Caco-2 (cell line): ENCODE measurements at regions of chr15 and their contacts with region 1.

Region 1: GRCh38 chr15:49046220-49047102 is at the start of gene SECISBP2L:
- DNase-seq: peak; percentile 96
- H3K4me3 ChIP-seq: peak within 1 kb of the TSS; percentile 98
- H3K4me3 Mint-ChIP-seq: peak within 1 kb of the TSS; percentile 97
- H3K27ac Mint-ChIP-seq: peak within 1 kb of the TSS; percentile 91
- H3K4me1 ChIP-seq: no peaks in the 10 kb centered on the region
- H3K4me1 Mint-ChIP-seq: peaks cover 7% of the 10 kb centered on the region
- H3K27me3 ChIP-seq: no peaks in the 10 kb centered on the region
- H3K27me3 Mint-ChIP-seq: no peaks in the 10 kb centered on the region
- CTCF ChIP-seq: peak in 1 of 2 experiments; percentile 70
- total RNA-seq, gene SECISBP2L: 27.9 and 29.7 TPM in 2 replicates

Region 2: GRCh38 chr15:48330855-48331795 is 715.3 kb before region 1 on chr15 and contains the start of gene DUT:
- CTCF ChIA-PET with region 1: no interaction called
- POLR2A ChIA-PET with region 1: no interaction called
- intact Hi-C with region 1: loop called (anchors 10 kb)
- DNase-seq: peak; percentile 72 to 80
- H3K4me3 ChIP-seq: peak within 1 kb of the TSS; percentile 92
- H3K4me3 Mint-ChIP-seq: peak within 1 kb of the TSS; percentile 99
- H3K27ac Mint-ChIP-seq: peak within 1 kb of the TSS; percentile 98
- H3K4me1 ChIP-seq: 0 out of 2 replicates have a peak, but pooled peaks cover 3% of the 10 kb centered on the region
- H3K4me1 Mint-ChIP-seq: peaks cover 16% of the 10 kb centered on the region
- H3K27me3 ChIP-seq: no peaks in the 10 kb centered on the region
- H3K27me3 Mint-ChIP-seq: no peaks in the 10 kb centered on the region
- CTCF ChIP-seq: no peak
- total RNA-seq, gene DUT: 82.4 and 84.1 TPM in 2 replicates

Region 3: DNA sequence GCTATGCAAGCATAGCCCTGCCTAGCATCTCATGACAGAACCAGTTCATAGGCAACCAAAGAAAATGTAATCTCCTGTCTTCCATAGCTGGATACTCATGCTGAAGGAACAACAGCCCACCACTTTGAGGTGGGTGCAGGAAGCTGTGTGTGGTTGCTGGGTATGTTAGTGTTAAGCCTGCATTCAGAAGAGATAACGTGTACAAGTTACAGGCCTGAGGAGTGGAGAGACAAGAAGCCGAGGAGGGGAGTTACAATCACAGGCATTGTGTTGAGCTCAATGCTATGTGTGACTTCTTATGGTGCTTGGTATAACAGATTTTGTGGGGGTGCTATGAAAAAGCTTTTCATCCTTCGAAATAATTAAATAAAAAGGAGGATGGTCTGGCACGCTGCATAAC is 42.5 kb after region 1 on chr15:
- CTCF ChIA-PET with region 1: no interaction called
- POLR2A ChIA-PET with region 1: no interaction called
- intact Hi-C with region 1: loop called (anchors 5 kb)
- DNase-seq: no peak
- H3K4me3 ChIP-seq: no peak overlapping the region
- H3K4me3 Mint-ChIP-seq: no peak overlapping the region
- H3K27ac Mint-ChIP-seq: no peak overlapping the region
- H3K4me1 ChIP-seq: peaks cover 11% of the 10 kb centered on the region
- H3K4me1 Mint-ChIP-seq: peaks cover 11% of the 10 kb centered on the region
- H3K27me3 ChIP-seq: no peaks in the 10 kb centered on the region
- H3K27me3 Mint-ChIP-seq: no peaks in the 10 kb centered on the region
- CTCF ChIP-seq: no peak

Region 4: DNA sequence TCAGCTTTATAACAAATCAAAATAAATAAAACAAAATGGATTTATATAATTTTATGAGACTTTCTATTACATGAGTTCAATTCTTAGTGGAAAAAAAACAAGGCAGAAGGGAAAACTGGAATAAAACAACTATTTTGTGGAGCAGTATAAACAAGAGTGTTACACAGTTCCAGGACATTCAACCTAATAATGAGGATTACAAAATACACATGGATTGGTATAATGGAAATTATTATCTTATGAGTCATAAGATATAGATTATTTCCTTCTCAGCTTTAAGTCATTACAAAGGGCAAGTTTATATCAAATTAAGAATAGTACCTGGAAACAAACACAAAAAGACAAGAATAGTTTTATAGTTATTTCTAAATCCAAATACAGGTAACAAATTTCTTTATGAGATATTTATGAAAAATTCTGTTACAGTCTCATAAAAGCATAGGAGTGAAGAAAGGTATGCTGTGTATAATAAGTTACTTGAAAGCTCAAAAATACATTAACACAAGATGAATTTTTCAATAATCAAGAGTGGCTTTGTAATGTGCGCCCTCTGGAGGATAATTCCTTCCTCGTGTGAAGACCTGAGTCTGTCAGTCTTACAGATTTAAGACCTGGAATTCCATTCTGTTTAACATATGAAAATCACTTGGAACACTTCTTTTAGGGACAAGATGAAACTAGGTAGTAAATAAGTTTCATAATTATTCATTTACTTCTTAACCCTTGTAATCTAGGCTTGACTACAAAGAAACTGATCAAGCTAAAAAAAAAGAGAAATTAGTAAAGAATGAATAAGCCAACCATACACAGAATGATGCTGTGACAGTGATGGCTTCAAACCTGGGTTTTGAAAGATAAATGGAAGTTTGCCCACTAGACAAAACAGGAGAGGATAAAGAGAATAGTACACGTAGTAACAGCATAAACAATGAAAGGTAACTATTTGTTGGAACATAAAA is 99.5 kb after region 1 on chr15:
- CTCF ChIA-PET with region 1: interaction called, 7 read pairs
- POLR2A ChIA-PET with region 1: no interaction called
- intact Hi-C with region 1: loop called (anchors 1 kb)
- DNase-seq: peak; percentile 37 to 54
- H3K4me3 ChIP-seq: no peak overlapping the region
- H3K4me3 Mint-ChIP-seq: no peak overlapping the region
- H3K27ac Mint-ChIP-seq: no peak overlapping the region
- H3K4me1 ChIP-seq: no peaks in the 10 kb centered on the region
- H3K4me1 Mint-ChIP-seq: peaks cover 8% of the 10 kb centered on the region
- H3K27me3 ChIP-seq: no peaks in the 10 kb centered on the region
- H3K27me3 Mint-ChIP-seq: no peaks in the 10 kb centered on the region
- CTCF ChIP-seq: peak; percentile 68 to 71

Region 5: GRCh38 chr15:49155110-49155833 is 108.8 kb after region 1 on chr15 and contains the start of gene COPS2:
- CTCF ChIA-PET with region 1: interaction called, 5 read pairs
- POLR2A ChIA-PET with region 1: no interaction called
- intact Hi-C with region 1: loop called (anchors 1 kb)
- DNase-seq: peak; percentile 94 to 95
- H3K4me3 ChIP-seq: peak within 1 kb of the TSS; percentile 98
- H3K4me3 Mint-ChIP-seq: peak within 1 kb of the TSS; percentile 99
- H3K27ac Mint-ChIP-seq: peak within 1 kb of the TSS; percentile 97
- H3K4me1 ChIP-seq: no peaks in the 10 kb centered on the region
- H3K4me1 Mint-ChIP-seq: peaks cover 7% of the 10 kb centered on the region
- H3K27me3 ChIP-seq: no peaks in the 10 kb centered on the region
- H3K27me3 Mint-ChIP-seq: no peaks in the 10 kb centered on the region
- CTCF ChIP-seq: no peak
- total RNA-seq, gene COPS2: 83.8 and 85.4 TPM in 2 replicates

Region 6: DNA sequence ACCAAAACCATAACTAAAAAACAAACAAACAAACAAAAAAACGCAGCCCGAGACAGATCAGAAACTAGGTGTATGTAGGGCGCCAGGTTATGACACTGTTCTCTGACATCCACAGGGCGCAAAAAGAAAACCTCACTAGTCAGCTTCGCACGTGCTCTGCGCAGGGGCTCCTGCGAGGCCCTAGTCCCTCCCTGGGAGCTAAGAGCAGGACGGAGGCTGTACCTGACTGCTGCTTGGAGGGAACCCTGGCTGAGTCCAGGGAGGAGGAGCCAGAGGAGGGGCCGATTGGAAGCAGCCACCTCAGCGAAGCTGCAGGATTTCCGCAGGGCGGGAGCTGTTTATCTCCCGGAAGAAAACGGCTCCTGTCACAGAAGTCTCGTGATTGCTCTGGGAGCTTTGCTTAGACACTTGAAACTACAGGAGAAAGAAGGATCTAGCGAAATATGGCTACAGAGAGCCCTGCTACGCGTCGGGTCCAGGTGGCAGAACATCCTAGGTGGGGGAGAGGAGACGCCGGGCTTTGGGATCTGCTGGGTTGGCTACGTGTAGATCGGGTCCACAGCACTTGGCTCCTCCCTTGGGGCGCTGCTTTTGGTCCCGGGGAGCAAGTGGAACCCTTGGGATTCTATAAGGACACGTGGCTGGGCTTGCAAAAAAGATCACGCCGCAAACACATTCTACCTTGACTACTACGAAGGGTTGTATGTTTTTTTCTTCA is 123.6 kb after region 1 on chr15 and contains the start of gene GALK2:
- CTCF ChIA-PET with region 1: no interaction called
- POLR2A ChIA-PET with region 1: no interaction called
- intact Hi-C with region 1: no loop called
- DNase-seq: peak; percentile 95 to 97
- H3K4me3 ChIP-seq: peak within 1 kb of the TSS; percentile 61
- H3K4me3 Mint-ChIP-seq: peak within 1 kb of the TSS; percentile 90
- H3K27ac Mint-ChIP-seq: peak within 1 kb of the TSS; percentile 97
- H3K4me1 ChIP-seq: peaks cover 6% of the 10 kb centered on the region
- H3K4me1 Mint-ChIP-seq: peaks cover 12% of the 10 kb centered on the region
- H3K27me3 ChIP-seq: no peaks in the 10 kb centered on the region
- H3K27me3 Mint-ChIP-seq: no peaks in the 10 kb centered on the region
- CTCF ChIP-seq: no peak
- total RNA-seq, gene GALK2: 25.5 and 29.8 TPM in 2 replicates

Region 7: DNA sequence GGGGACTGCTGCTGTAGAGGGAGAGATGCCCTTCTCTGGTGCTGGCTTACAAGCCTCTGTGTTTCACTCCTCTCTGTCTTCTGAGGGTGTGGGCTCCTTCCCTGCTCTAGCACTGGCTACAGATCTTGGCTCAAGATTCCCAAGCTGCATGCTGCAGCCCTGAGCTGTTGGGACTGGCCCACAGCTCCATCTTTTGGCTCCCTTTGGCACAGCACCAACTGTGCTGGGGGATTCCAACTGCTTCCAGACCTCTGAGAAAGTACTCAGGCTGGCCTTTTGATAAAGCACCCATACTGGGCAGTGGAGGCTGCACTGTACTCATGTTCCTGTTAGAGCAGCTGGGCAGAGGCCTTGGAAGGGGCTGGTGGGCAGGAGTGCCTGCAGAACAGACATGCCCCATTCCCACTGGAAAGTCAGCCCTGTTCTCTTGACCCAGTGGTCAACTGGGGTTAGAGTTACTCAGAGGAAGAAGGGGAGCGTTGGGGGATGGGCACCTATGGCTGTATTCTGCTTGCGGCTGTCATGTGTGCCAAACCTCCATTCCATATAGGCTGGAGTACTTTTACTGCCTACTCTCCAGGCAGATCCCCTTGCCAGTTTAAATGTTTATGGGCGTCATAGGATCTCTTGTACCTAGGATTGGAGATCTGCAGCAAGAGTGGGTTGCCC is 179.3 kb after region 1 on chr15:
- CTCF ChIA-PET with region 1: no interaction called
- POLR2A ChIA-PET with region 1: no interaction called
- intact Hi-C with region 1: loop called (anchors 10 kb)
- DNase-seq: peak; percentile 48 to 58
- H3K4me3 ChIP-seq: no peak overlapping the region
- H3K4me3 Mint-ChIP-seq: no peak overlapping the region
- H3K27ac Mint-ChIP-seq: no peak overlapping the region
- H3K4me1 ChIP-seq: no peaks in the 10 kb centered on the region
- H3K4me1 Mint-ChIP-seq: peaks cover 10% of the 10 kb centered on the region
- H3K27me3 ChIP-seq: no peaks in the 10 kb centered on the region
- H3K27me3 Mint-ChIP-seq: no peaks in the 10 kb centered on the region
- CTCF ChIP-seq: peak; percentile 35 to 46